Caco-2 (cell line): ENCODE measurements at regions of chr6 and their contacts with region 1.

Region 1: GRCh38 chr6:75284632-75285286 is at the start of gene TMEM30A:
- DNase-seq: peak; percentile 97 to 98
- H3K4me3 ChIP-seq: peak within 1 kb of the TSS; percentile 97
- H3K4me3 Mint-ChIP-seq: no peak within 1 kb of the TSS
- H3K27ac Mint-ChIP-seq: no peak within 1 kb of the TSS
- H3K4me1 ChIP-seq: peaks cover 13% of the 10 kb centered on the region; the same call in 1 of the 2 replicates
- H3K4me1 Mint-ChIP-seq: no peaks in the 10 kb centered on the region
- H3K27me3 ChIP-seq: no peaks in the 10 kb centered on the region
- H3K27me3 Mint-ChIP-seq: no peaks in the 10 kb centered on the region
- CTCF ChIP-seq: no peak
- total RNA-seq, gene TMEM30A: 55.8 and 58.9 TPM in 2 replicates

Region 2: GRCh38 chr6:73739096-73739495 is 1545.7 kb before region 1 on chr6:
- CTCF ChIA-PET with region 1: interaction called, 11 read pairs
- POLR2A ChIA-PET with region 1: no interaction called
- intact Hi-C with region 1: no loop called
- DNase-seq: peak in 1 of 2 experiments; percentile 56
- H3K4me3 ChIP-seq: no peak overlapping the region
- H3K4me3 Mint-ChIP-seq: no peak overlapping the region
- H3K27ac Mint-ChIP-seq: no peak overlapping the region
- H3K4me1 ChIP-seq: no peaks in the 10 kb centered on the region
- H3K4me1 Mint-ChIP-seq: no peaks in the 10 kb centered on the region
- H3K27me3 ChIP-seq: no peaks in the 10 kb centered on the region
- H3K27me3 Mint-ChIP-seq: peaks cover 3% of the 10 kb centered on the region
- CTCF ChIP-seq: peak; percentile 63 to 82

Region 3: GRCh38 chr6:75243333-75244062 is 41.3 kb before region 1 on chr6 and contains the start of gene COX7A2:
- CTCF ChIA-PET with region 1: no interaction called
- POLR2A ChIA-PET with region 1: interaction called, 4 read pairs
- intact Hi-C with region 1: loop called (anchors 1 kb)
- DNase-seq: peak; percentile 89 to 92
- H3K4me3 ChIP-seq: peak within 1 kb of the TSS; percentile 54
- H3K4me3 Mint-ChIP-seq: peak within 1 kb of the TSS; percentile 99
- H3K27ac Mint-ChIP-seq: peak within 1 kb of the TSS; percentile 100
- H3K4me1 ChIP-seq: peaks cover 3% of the 10 kb centered on the region; the same call in 1 of the 2 replicates
- H3K4me1 Mint-ChIP-seq: no peaks in the 10 kb centered on the region
- H3K27me3 ChIP-seq: no peaks in the 10 kb centered on the region
- H3K27me3 Mint-ChIP-seq: no peaks in the 10 kb centered on the region
- CTCF ChIP-seq: no peak
- total RNA-seq, gene COX7A2: 381 and 385 TPM in 2 replicates

Region 4: GRCh38 chr6:75266716-75267291 is 18.0 kb before region 1 on chr6:
- CTCF ChIA-PET with region 1: no interaction called
- POLR2A ChIA-PET with region 1: no interaction called
- intact Hi-C with region 1: loop called (anchors 1 kb)
- DNase-seq: peak in 1 of 2 experiments; percentile 26
- H3K4me3 ChIP-seq: no peak overlapping the region
- H3K4me3 Mint-ChIP-seq: no peak overlapping the region
- H3K27ac Mint-ChIP-seq: no peak overlapping the region
- H3K4me1 ChIP-seq: no peaks in the 10 kb centered on the region
- H3K4me1 Mint-ChIP-seq: no peaks in the 10 kb centered on the region
- H3K27me3 ChIP-seq: no peaks in the 10 kb centered on the region
- H3K27me3 Mint-ChIP-seq: no peaks in the 10 kb centered on the region
- CTCF ChIP-seq: peak; percentile 68 to 74

Region 5: DNA sequence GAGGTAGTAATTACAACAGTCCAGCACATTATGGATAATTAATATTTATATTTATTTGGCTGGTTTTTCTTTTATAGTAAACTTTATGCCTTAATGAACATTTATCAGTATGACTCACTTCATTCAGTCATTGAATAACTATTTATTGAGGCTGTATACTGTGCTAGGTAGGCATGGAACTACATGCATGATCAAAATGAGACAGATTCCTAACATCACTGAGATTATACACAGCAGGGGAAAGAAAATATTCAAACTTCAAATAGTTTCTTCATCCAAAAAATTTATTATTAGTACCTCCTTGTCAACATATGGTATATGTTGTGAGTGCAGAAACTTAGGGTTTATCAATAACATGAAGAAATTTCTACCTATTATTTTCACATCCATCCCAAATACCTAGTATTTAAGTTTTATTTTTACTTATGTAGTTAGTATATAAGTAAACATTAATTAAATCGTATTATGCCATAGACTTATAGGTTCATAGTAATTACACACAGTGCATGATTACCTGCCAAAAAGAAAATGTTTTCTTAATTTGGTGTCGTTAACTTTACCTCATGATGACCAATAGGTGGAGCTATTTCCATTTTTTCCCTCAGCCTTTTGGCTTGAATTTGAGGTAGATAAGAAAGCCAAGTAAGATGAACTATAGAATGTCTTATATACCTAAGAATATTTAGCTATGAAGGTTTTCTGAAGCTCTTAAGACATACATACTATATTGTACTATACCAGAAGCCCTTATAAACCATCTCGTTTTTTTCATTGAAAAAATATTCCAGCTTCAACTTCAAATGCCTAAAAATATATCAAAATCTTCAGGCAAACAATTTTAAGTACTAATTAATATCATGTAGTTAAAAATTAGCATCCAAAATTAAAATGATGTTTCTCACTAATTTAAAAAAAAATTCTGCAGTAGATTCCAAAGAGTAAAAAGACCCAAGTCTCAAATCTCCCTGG is 12.3 kb after region 1 on chr6:
- CTCF ChIA-PET with region 1: interaction called, 10 read pairs
- POLR2A ChIA-PET with region 1: no interaction called
- intact Hi-C with region 1: no loop called
- DNase-seq: peak in 1 of 2 experiments; percentile 29
- H3K4me3 ChIP-seq: no peak overlapping the region
- H3K4me3 Mint-ChIP-seq: no peak overlapping the region
- H3K27ac Mint-ChIP-seq: no peak overlapping the region
- H3K4me1 ChIP-seq: no peaks in the 10 kb centered on the region
- H3K4me1 Mint-ChIP-seq: no peaks in the 10 kb centered on the region
- H3K27me3 ChIP-seq: no peaks in the 10 kb centered on the region
- H3K27me3 Mint-ChIP-seq: peaks cover 3% of the 10 kb centered on the region
- CTCF ChIP-seq: peak; percentile 57 to 66

Region 6: DNA sequence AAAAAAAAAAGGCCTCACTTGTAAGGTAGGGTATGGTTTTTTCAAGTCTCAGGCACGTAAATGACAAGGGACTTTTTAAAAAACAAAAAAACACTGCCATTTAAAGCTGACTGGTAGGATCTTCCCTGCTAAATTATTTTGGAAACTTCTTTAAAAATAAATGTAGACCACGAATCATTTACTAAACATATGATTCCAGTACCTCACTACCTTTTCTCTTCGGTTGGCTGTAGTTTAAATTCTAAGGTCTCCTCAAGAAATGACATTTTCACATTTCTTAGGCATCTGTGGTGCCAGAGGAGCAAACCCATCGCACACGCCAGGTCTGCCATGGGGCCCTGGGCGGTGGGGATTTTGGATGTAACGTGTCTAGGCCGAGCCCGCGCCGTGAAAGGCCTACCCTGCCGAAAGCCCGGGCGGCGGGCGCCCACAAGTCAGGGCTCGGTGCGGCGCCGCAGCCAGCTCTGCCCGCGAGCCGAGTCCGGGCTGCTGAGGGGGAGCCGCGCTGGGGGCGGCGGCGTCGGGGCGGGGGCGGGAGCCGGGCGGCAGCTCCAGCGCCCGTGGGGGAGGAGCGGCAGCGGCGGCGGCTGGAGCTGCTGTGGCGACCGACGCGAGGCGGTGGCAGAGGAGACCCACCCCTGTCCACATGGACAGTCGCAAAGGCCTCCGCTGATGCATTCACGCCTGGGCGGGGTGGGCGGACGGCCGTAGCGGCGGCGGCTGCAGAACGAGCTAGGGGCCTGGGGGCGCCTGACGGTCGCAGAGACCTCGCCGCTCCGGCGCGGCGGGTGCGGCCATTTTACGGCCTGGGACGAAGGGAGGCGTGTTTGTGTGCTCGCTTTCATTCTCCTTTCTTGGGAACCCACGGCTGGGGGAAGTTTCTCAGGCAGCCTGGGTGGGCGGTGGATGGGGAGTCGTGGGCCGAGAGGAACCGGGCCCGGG is 316.8 kb after region 1 on chr6 and contains the start of gene SENP6:
- CTCF ChIA-PET with region 1: no interaction called
- POLR2A ChIA-PET with region 1: no interaction called
- intact Hi-C with region 1: loop called (anchors 2 kb)
- DNase-seq: peak; percentile 83 to 88
- H3K4me3 ChIP-seq: peak within 1 kb of the TSS; percentile 94
- H3K4me3 Mint-ChIP-seq: peak within 1 kb of the TSS; percentile 85
- H3K27ac Mint-ChIP-seq: peak within 1 kb of the TSS; percentile 92
- H3K4me1 ChIP-seq: peaks cover 4% of the 10 kb centered on the region; the same call in 1 of the 2 replicates
- H3K4me1 Mint-ChIP-seq: peaks cover 27% of the 10 kb centered on the region
- H3K27me3 ChIP-seq: no peaks in the 10 kb centered on the region
- H3K27me3 Mint-ChIP-seq: no peaks in the 10 kb centered on the region
- CTCF ChIP-seq: no peak
- total RNA-seq, gene SENP6: 91.9 and 94.9 TPM in 2 replicates